PC-3 (cell line): ENCODE measurements at regions of chr14 and their contacts with region 1.

Region 1: DNA sequence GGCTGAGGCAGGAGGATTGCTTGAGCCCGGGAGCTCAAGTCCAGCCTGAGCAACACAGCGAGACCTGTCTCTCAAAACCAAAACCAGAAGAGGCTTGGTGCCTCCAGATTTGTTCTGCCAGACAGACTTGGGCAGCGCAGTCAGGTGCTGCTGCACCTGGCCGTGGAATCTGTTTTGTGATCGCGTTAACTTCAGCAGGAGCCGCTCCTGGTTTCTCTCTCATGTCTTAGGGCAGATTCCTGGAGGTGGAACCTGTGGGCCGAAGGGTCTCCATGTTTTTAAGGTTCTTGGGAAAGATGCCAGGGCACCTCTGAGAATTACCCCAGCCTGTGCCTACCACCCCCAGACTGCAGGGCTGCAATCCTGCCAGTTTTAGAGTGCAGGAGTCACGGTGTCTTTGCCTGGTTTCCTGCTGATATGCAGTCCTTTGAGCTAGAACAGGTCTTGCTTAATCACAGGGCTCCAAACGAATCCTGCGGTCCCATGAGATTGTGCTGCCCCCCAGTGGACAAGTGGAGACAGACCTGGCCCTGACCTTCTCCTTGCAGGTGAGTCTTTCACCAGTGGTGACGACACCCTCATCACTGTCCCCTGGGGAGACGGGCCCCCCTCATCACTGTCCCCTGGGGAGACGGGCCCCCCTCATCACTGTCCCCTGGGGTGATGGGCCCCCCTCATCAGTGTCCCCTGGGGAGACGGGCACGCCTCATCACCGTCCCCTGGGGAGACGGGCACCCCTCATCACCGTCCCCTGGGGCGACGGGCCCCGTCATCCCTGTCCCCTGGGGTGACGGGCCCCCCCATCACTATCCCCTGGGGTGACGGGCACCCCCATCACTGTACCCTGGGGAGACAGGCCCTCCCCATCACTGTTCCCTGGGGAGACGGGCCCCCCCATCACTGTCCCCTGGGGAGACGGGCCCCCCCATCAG is 37.6 kb downstream of the PACS2 start:
- DNase-seq: peak; percentile 92
- ATAC-seq: peak; percentile 98
- H3K4me3 ChIP-seq: no peak overlapping the region
- H3K27ac ChIP-seq: no peak overlapping the region
- H3K4me1 ChIP-seq: no peaks in the 10 kb centered on the region
- H3K27me3 ChIP-seq: no peaks in the 10 kb centered on the region
- CTCF ChIP-seq: peak; percentile 81

Region 2: GRCh38 chr14:105314287-105315200 is 37.6 kb before region 1 on chr14 and contains the start of gene PACS2:
- CTCF ChIA-PET with region 1: interaction called, 7 read pairs
- POLR2A ChIA-PET with region 1: no interaction called
- intact Hi-C with region 1: loop called (anchors 2 kb)
- DNase-seq: peak; percentile 88
- ATAC-seq: peak; percentile 54
- H3K4me3 ChIP-seq: peak within 1 kb of the TSS; percentile 87
- H3K27ac ChIP-seq: no peak within 1 kb of the TSS
- H3K4me1 ChIP-seq: peaks cover 23% of the 10 kb centered on the region; the same call in 1 of the 2 replicates
- H3K27me3 ChIP-seq: no peaks in the 10 kb centered on the region
- CTCF ChIP-seq: no peak
- total RNA-seq, gene PACS2: 56.0 and 62.0 TPM in 2 replicates